AG04449 (cell line): ENCODE measurements at regions of chr17 and their contacts with region 1.

Region 1: GRCh38 chr17:31433091-31433790 is 41.8 kb downstream of the RAB11FIP4 start:
- DNase-seq: no peak
- H3K4me3 ChIP-seq: no peak overlapping the region
- CTCF ChIP-seq: no peak

Region 2: DNA sequence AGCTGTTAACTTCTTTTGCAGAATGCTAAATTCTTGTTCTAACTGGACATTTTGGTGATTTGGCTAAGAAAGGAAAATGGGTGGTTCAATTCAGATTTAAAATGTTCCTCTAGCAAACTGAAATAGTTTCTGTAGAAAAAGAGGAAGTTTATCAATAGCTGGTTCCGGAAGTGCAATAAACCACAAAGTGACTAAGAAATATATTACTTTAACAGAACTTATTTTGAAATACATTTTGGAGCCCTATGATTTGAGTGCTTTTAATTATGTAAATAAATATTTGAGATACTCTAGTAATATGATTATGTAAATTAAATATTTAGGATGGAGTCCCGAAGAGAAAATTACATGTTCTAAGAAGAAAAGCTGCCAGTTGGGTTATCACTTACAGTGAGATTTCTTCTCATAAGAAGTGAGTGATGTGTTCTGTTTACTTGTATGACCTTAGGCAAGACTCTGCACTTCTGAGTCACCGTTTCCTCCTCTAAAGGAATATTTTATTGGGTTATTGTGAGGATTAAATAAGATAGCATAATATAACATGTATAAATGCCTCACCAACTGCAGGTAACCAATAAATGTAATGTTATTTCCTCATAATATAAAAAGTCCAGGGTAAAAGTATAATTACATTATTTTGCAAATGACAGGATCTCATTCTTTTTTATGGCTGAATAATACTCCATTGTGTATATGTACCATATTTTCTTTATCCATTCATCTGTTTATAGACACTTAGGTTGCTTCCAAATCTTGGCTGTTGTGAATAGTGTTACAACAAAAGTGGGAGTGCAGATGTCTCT is 119.1 kb before region 1 on chr17 and contains the start of gene EVI2B:
- CTCF ChIA-PET with region 1: no interaction called
- POLR2A ChIA-PET with region 1: no interaction called
- DNase-seq: no peak
- H3K4me3 ChIP-seq: no peak within 1 kb of the TSS
- CTCF ChIP-seq: no peak

Region 3: GRCh38 chr17:31448467-31449077 is 15.3 kb after region 1 on chr17:
- CTCF ChIA-PET with region 1: interaction called, 12 read pairs
- POLR2A ChIA-PET with region 1: no interaction called
- DNase-seq: peak; percentile 9
- H3K4me3 ChIP-seq: no peak overlapping the region
- CTCF ChIP-seq: no peak

Region 4: DNA sequence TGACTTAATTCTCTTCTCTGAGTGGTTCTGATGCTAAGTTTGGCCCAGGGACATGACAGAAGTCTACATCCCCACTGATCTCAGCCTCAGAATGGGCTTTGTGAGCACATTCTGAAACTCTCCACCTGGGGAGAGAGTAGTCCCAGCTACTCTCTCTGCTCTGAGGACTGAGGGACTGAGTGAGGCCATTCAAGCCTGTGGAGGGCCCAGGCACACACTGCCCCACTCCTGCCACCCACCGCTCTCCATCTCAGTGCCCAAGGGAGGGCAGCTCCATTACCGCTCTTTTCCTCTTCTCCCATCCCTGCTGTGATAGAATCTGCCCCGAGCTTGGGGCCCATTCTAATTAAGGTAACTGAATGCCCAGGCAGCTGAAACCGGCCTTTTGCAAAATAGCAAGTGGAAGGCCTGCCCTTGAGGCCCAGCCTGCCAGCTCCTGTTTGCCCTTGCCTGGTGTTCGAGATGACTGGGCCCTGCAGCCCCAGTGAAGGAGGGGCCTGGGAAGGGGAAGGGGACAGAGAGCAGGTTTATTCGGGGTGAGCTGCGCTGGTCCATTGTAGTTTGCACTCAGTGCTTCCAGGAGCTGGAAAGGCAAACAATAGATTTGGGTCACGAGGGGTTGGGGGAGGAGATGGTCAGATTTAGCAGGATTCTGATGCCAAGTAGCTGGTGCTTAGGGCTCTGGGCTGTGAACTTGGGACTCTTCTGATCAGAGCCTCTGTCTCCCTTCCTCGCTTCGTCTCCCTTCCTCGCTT is 34.4 kb after region 1 on chr17:
- CTCF ChIA-PET with region 1: interaction called, 12 read pairs
- POLR2A ChIA-PET with region 1: no interaction called
- DNase-seq: no peak
- H3K4me3 ChIP-seq: no peak overlapping the region
- CTCF ChIP-seq: no peak

Region 5: DNA sequence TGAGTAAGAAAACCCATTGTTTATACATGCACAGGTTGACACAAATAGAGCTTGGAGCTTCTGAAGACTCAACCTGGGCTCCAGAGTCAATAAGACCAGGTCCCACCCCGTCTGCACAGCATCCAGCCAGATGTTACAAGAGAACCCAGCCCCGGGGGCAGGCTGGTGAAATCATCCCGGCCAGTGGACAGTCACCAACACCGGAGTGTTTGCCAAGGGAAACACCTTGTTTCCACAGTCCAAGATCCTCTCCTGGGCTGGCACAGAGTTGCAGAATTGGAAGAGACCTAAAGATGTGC is 48.5 kb after region 1 on chr17:
- CTCF ChIA-PET with region 1: no interaction called
- POLR2A ChIA-PET with region 1: no interaction called
- DNase-seq: no peak
- H3K4me3 ChIP-seq: no peak overlapping the region
- CTCF ChIP-seq: no peak

Region 6: DNA sequence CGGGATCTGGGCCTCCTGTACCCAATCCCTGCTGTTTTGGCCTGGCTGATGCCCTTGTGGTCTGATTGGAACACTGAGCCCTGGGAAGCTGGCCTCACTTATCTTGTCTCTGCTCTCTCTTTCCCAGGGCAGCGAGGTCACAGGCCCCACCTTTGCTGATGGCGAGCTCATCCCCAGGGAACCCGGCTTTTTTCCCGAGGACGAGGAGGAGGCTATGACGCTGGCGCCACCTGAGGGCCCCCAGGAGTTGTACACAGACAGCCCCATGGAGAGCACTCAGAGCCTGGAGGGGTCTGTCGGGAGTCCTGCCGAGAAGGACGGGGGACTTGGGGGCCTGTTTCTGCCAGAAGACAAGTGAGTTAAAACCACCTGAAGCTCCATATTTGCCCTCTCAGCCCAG is 84.3 kb after region 1 on chr17:
- CTCF ChIA-PET with region 1: interaction called, 196 read pairs
- POLR2A ChIA-PET with region 1: no interaction called
- DNase-seq: no peak
- H3K4me3 ChIP-seq: no peak overlapping the region
- CTCF ChIP-seq: peak; percentile 30

Region 7: DNA sequence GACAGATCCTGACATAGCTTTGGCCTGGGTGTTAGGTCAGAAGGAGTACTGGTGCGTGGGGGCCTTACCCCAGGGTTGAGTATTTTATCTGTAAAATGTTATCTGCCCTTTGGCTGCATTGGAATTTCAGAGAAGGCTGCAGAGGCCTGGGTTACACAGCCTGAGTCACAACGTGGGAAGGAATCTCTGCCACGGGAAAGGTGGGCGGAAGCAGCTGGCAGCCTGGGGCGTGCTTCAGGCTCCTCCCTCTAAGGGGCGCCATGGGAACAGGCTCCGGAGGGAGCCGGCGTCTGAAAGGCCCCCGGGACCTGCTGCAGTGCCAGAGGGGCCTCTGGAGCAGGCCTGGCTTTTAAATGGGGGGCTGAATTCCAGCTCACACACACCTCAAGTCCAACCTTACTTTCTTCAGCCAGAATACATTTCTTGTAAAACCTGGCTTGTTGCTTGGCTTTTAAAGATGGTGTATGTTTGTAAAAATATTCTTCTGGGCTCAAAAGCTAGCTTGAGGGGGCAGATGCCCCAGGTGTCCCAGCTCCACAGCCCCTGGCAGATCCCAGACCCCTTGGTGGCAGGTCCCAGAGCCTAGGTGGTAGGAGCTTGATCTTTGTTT is 100.4 kb after region 1 on chr17:
- CTCF ChIA-PET with region 1: interaction called, 196 read pairs
- POLR2A ChIA-PET with region 1: no interaction called
- DNase-seq: peak; percentile 23
- H3K4me3 ChIP-seq: no peak overlapping the region
- CTCF ChIP-seq: peak; percentile 54

Region 8: GRCh38 chr17:31579265-31579664 is 146.0 kb after region 1 on chr17:
- CTCF ChIA-PET with region 1: no interaction called
- POLR2A ChIA-PET with region 1: no interaction called
- DNase-seq: no peak
- H3K4me3 ChIP-seq: no peak overlapping the region
- CTCF ChIP-seq: no peak

Region 9: GRCh38 chr17:31907342-31907962 is 474.2 kb after region 1 on chr17:
- CTCF ChIA-PET with region 1: interaction called, 11 read pairs
- POLR2A ChIA-PET with region 1: no interaction called
- DNase-seq: no peak
- H3K4me3 ChIP-seq: no peak overlapping the region
- CTCF ChIP-seq: no peak